ENCODE measurements at regions of chr9 and their contacts with region 1.

Region 1: DNA sequence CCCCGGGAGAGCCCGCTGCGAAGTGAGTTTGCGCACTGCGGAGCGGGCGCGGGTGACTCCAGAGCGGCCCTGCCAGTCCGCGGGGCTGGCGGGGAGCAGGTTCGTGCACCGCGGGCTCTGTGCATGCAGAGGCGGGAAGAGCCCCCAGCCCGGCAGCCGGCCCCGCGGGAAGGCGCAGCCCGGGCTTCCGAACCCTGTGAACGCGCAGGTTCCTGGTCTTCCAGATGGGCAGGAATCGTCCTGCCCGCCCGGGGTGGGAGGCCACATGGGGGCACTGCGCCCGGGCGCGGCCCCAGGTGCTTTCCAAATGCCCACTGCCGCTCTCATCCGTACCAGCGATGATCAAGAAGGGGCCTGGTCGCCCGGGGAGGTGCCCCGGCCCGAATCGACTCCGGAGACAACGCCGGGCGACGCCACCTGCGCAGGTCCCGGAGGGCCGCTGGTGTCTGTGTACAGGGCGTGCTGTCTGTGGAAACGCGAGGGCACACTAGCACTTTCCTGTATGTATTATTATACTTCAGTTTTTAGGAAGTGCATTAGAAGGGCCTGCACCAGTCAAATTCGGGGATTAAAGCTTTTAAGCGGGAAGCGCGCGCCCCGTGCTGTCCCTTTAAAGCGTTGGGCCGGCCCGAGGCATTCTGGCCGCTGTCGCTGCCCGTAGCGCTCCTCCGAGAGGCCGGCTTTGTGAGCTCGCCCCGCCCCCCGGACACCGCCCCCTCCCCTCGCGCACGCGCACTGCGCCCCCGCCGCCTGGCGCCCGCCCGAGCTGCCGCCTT is at the start of gene WDR5:
- DNase-seq: peak; percentile 90
- H3K4me3 Mint-ChIP-seq: peak within 1 kb of the TSS; percentile 77
- H3K27ac Mint-ChIP-seq: peak within 1 kb of the TSS; percentile 81
- H3K4me1 Mint-ChIP-seq: peaks cover 31% of the 10 kb centered on the region
- H3K27me3 Mint-ChIP-seq: no peaks in the 10 kb centered on the region
- CTCF ChIP-seq: no peak
- total RNA-seq, gene WDR5: 36.5 and 43.8 TPM in 2 replicates

Region 2: DNA sequence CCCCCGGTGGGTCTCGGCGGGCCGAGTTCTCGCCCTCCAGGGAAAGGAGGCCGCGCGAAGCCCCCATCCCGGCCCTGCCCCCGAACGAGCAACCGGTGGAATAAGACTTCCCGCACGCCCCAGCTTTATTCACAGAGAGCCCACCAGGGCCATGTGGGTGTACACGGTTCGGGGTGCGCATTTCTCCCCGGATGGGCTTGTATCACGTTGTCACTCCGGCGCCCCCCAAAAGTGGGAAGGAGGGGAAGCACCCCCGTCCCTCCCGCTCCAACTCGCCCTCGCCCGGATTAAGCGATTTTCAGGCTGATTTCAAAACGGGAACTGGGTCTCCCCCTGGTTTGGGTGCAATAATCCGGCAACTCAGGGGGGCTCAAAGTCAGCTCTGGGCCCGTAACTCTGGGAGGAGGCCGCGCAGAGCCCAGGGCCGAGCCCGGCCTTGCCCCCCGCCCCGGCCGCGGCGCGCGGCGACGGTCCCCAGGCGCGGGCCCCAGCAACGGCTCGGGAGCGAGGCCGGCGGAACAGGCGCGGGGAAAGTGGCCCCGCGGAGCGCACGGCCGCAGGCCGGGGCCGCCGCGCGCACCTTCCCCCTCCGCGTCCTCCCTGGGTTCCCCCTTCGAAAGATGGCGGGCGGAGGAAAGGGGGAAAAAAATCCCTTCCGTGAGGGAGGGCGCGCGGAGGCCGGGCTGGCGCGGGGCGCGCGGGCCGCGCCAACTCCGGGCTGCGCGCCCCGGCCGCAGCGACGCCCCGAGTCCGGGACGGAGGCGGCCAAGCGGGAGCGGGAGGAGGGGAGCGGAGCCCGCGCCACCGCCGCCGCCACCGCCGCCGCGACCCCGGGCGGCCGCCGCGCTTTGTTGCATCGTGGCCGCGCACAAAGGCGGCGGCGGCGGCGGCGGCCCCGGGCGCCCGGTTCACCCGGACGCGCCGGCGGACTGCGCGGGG is 68.3 kb before region 1 on chr9:
- CTCF ChIA-PET with region 1: no interaction called
- POLR2A ChIA-PET with region 1: interaction called, 23 read pairs
- intact Hi-C with region 1: no loop called
- DNase-seq: no peak
- H3K4me3 Mint-ChIP-seq: peak overlapping the region; percentile 81
- H3K27ac Mint-ChIP-seq: peak overlapping the region; percentile 74
- H3K4me1 Mint-ChIP-seq: no peaks in the 10 kb centered on the region
- H3K27me3 Mint-ChIP-seq: peaks cover 19% of the 10 kb centered on the region
- CTCF ChIP-seq: no peak

Region 3: DNA sequence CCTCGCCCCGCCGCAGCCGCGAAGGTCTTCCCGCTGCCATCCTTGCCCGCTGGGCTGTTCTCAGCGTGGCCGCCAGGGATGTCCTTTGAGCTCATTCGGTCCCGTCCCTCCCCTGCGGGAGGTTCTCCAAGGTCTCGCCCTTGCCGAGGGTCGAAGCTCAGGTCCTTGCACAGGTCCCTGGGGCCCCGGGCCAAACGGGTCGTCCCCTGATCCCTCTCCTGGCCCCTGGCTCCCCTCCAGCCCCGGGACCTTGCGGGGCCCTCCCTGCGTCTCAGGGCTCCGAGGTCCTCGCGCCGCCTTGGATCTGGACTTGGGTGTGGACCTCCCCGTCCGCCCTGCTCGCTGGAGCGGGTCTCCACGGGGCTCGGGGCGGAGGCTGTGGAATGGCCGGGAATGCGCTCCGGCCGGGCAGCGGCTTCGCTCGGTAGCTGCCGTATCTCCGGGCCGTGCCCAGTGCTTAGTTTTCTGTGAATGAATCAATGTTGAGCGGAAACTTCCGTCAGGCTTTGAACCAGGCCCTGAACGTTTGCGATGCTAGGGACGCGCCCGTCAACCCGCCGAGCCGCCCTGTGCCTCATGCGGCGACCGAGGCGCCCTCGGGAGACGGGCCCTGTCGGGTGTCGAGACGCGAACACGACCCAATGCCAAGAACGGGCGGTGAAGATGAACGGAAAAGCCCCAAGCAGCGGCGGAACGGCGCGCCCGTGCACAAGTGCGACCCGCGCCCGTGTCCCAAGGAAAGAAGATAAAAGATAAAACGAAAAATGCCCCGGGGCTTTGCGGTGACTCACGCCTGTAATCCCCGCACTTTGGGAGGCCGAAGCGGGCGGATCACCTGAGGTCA is 28.0 kb after region 1 on chr9:
- CTCF ChIA-PET with region 1: no interaction called
- POLR2A ChIA-PET with region 1: interaction called, 13 read pairs
- intact Hi-C with region 1: no loop called
- DNase-seq: no peak
- H3K4me3 Mint-ChIP-seq: peak overlapping the region; percentile 25
- H3K27ac Mint-ChIP-seq: no peak overlapping the region
- H3K4me1 Mint-ChIP-seq: peaks cover 6% of the 10 kb centered on the region
- H3K27me3 Mint-ChIP-seq: no peaks in the 10 kb centered on the region
- CTCF ChIP-seq: no peak